IMR-90 (cell line): ENCODE measurements at regions of chr6 and their contacts with region 1.

Region 1: DNA sequence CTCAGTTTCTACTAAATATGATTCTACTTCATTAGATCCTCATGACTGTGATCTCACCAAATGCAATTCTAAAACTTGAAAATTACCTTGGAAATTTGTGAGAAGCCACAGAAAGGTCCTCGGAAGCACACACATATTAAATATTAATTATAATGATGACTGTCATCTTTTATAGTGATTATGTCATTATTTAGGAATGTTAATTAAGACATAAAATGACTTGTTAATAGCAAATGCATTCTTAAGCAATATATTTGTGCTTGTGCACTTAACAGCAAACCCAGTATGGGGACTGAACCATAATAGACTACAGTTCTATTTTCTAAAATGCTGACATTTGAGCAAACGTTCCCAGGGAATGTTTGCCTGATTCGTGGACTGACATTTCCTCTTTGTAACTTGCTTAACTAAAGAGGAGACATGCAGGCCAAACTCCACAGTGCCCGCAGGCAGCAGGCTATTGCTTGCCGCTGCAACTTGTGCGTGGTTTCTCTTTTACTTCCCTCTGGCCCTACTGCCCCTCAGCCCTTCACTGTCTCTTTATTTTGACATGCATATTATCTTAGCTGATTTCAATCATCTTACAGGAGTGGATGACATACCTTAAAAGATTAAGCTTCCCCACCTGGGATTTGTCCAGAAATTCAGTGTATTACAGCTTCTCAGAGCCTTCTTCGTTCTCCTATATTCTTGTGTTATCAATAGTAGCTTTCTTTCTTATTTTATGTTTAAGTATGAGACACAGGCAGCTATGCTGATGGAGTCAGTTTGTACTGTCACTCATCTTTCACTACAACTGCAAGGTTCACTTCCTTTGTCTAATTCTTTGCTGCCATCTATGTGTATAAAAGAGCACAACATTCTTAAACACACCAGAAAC is 141.5 kb downstream of the GMDS start:
- DNase-seq: peak; percentile 69
- ATAC-seq: peak; percentile 82
- H3K4me3 ChIP-seq: no peak overlapping the region
- H3K27ac ChIP-seq: no peak overlapping the region
- H3K4me1 ChIP-seq: peaks cover 3% of the 10 kb centered on the region
- H3K27me3 ChIP-seq: no peaks in the 10 kb centered on the region
- CTCF ChIP-seq: peak; percentile 81
- POLR2A ChIP-seq: 0 out of 2 replicates have a peak, but pooled peaks have one; percentile 29
- RAD21 ChIP-seq: peak; percentile 92

Region 2: GRCh38 chr6:1604158-1605030 is 499.5 kb before region 1 on chr6:
- CTCF ChIA-PET with region 1: interaction called, 9 read pairs
- POLR2A ChIA-PET with region 1: no interaction called
- dilution Hi-C with region 1: no loop called
- in situ Hi-C with region 1: loop called (anchors 10 kb)
- intact Hi-C with region 1: loop called (anchors 2 kb)
- DNase-seq: peak; percentile 36
- ATAC-seq: peak; percentile 93
- H3K4me3 ChIP-seq: peak overlapping the region; percentile 45
- H3K27ac ChIP-seq: no peak overlapping the region
- H3K4me1 ChIP-seq: peaks cover 2% of the 10 kb centered on the region; the same call in 1 of the 2 replicates
- H3K27me3 ChIP-seq: peaks cover 29% of the 10 kb centered on the region
- CTCF ChIP-seq: peak; percentile 95
- POLR2A ChIP-seq: no peak
- RAD21 ChIP-seq: peak; percentile 97

Region 3: DNA sequence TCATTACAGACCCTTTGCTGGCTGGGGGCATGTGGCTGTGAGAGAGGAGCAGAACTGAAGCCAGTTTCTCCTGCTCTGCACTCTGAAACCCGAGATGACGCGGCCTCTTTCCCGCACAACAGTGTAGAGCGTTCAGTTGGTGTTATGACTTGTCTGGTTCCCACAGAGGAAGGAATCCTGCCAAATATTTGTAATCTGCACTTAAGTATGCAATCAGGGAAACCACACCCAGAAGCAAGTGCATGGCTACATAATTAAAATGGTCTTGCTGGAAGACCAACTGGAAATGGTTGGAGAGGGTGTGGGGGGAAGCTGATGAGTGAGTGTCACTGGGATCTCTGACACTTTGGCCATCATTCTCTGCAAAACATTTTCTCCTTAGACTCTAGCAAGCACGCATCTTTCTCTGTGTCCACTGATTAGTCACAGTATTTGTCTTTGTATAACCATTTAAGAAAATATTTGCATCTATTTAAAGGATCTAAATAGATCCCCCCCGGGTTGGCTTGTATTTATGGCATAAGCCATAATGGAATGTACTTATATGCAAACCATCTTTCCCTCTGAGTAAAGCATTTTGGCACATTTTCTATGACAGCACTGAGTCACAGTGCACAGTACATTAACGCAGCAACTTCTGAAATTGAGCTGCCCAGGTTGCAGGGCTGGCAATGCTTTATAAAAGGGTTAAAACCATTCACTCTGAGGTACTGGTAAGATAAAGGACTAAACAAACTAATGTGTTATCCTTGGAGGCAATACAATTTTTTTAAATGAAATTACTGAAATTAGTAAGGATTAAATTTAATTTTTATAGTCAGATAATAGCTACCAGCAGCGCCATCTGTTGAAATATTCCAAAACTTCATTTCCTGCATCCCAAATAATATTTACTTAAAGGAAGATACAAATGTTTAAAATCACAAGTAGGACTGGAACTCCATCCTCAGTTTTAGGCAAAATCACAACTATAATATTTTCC is 417.5 kb before region 1 on chr6:
- CTCF ChIA-PET with region 1: no interaction called
- POLR2A ChIA-PET with region 1: no interaction called
- dilution Hi-C with region 1: no loop called
- in situ Hi-C with region 1: no loop called
- intact Hi-C with region 1: loop called (anchors 5 kb)
- DNase-seq: peak; percentile 96
- ATAC-seq: peak; percentile 89
- H3K4me3 ChIP-seq: no peak overlapping the region
- H3K27ac ChIP-seq: peak overlapping the region; percentile 83
- H3K4me1 ChIP-seq: peaks cover 14% of the 10 kb centered on the region
- H3K27me3 ChIP-seq: no peaks in the 10 kb centered on the region
- CTCF ChIP-seq: peak; percentile 50
- POLR2A ChIP-seq: no peak; the same call in 1 of the 2 replicates
- RAD21 ChIP-seq: peak; percentile 19; the same call in 1 of the 2 replicates

Region 4: DNA sequence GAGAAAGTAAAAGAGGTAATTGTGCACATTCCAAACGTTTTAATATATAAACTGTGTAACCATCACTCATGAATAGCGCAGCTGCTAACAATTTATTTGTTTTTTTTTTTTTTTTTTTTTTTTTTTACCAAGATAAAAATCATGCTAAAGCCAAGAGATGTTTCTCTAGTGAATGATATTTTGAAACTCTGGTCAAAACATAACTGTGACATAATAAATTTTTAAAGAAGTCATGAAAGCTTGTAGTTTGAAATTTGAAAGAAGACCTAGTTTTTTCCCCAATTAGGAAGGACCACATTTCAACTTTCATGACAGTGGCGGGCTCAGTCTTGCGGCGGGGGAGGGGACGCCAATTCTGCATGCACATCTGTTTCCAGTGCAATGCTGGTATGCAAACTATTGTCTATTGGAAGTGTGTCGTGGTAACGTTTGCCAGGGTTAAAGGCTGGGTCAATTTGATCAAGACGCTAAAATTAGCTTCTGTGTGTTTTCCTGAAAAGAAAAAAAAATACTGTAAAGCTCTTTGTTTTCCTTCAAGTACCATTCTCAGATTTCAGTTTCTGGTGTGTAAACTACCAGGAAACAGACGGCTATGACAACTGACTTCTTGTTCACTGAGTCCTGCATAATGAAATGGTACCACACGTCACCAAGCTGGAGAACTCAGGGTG is 282.2 kb before region 1 on chr6:
- CTCF ChIA-PET with region 1: no interaction called
- POLR2A ChIA-PET with region 1: no interaction called
- dilution Hi-C with region 1: no loop called
- in situ Hi-C with region 1: no loop called
- intact Hi-C with region 1: loop called (anchors 10 kb)
- DNase-seq: peak; percentile 31
- ATAC-seq: 0 out of 2 replicates have a peak, but pooled peaks have one; percentile 19
- H3K4me3 ChIP-seq: peak overlapping the region; percentile 24; the same call in 1 of the 2 replicates
- H3K27ac ChIP-seq: no peak overlapping the region
- H3K4me1 ChIP-seq: peaks cover 9% of the 10 kb centered on the region
- H3K27me3 ChIP-seq: no peaks in the 10 kb centered on the region
- CTCF ChIP-seq: no peak
- POLR2A ChIP-seq: no peak
- RAD21 ChIP-seq: no peak

Region 5: DNA sequence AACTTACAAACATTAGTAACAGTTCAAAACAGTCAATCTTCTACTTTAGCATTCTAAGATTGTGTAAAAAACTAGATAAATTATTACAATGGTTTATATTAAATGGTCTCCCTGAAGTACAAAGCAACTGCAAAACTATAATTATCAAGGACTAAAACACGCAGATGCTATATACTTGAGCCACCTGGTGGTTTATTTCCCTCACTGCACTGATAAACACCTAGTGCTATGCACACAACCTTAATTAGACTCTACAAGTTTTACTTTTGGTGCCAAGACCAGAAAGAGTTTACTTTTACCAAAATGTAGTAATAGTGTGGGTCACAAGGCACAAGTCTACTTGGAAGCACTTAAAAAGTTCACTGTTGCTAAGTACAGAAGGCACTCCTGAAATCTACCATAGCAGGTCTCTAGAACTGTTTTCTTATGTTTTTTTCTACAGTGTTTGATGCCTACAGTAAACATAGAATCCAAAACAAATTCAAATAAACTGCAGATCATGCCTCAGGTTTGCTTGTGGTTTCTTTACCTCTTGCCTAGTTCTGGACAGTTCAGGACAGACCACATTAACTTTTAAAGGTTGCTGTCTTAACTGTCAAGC is 92.3 kb after region 1 on chr6:
- CTCF ChIA-PET with region 1: interaction called, 3 read pairs
- POLR2A ChIA-PET with region 1: no interaction called
- dilution Hi-C with region 1: no loop called
- in situ Hi-C with region 1: no loop called
- intact Hi-C with region 1: loop called (anchors 1 kb)
- DNase-seq: peak; percentile 61
- ATAC-seq: peak; percentile 84
- H3K4me3 ChIP-seq: no peak overlapping the region
- H3K27ac ChIP-seq: no peak overlapping the region
- H3K4me1 ChIP-seq: peaks cover 8% of the 10 kb centered on the region; the same call in 1 of the 2 replicates
- H3K27me3 ChIP-seq: no peaks in the 10 kb centered on the region
- CTCF ChIP-seq: peak; percentile 72
- POLR2A ChIP-seq: no peak
- RAD21 ChIP-seq: peak; percentile 81

Region 6: DNA sequence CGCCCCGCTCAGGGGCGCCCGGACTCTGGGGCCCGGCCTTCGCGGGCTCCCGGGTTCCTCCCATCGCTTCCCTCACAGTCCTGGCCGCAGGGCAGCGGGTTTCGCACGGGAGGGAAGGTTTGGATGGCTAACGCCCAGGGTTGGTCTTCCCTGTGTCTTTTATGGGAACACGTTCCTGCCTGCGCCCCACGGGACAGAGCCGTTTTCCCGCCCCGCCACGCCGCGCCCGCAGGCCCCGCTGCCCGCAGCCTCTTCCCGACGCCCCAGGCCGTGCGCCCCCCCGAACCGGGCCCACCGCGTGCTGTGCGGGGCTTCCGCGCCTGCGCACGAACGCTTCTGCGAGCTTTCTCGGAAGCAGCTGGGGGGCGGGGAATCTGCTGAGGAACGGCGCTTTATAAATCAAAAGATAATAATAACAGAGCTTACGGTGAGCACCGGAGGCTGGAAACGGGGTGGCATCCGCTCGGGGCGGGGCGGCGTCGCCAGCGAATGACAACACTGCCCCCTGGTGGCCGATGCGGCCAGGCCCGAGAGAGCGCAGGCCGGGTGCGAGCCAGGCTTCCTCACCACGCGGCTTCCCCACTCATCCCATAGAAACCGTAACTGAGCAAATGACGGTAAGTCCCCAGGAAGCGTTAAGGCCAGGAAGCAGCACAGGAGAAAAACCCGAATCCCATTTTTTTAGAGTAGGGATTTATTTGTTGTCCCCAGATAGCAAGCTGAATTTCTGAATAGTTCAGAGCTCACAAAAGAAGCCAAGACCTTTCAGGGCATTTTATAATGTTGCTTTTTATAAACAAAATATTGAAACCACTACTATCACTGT is 530.5 kb after region 1 on chr6:
- CTCF ChIA-PET with region 1: no interaction called
- POLR2A ChIA-PET with region 1: no interaction called
- dilution Hi-C with region 1: no loop called
- in situ Hi-C with region 1: loop called (anchors 25 kb)
- intact Hi-C with region 1: loop called (anchors 1 kb)
- DNase-seq: peak; percentile 81
- ATAC-seq: peak; percentile 88
- H3K4me3 ChIP-seq: peak overlapping the region; percentile 17; the same call in 1 of the 2 replicates
- H3K27ac ChIP-seq: peak overlapping the region; percentile 24
- H3K4me1 ChIP-seq: peaks cover 19% of the 10 kb centered on the region
- H3K27me3 ChIP-seq: peaks cover under 1% of the 10 kb centered on the region
- CTCF ChIP-seq: peak; percentile 97
- POLR2A ChIP-seq: 0 out of 2 replicates have a peak, but pooled peaks have one; percentile 33
- RAD21 ChIP-seq: peak; percentile 94